Transverse colon (tissue), 4 donors: ENCODE measurements at regions of chr1 and their contacts with region 1.

Region 1: DNA sequence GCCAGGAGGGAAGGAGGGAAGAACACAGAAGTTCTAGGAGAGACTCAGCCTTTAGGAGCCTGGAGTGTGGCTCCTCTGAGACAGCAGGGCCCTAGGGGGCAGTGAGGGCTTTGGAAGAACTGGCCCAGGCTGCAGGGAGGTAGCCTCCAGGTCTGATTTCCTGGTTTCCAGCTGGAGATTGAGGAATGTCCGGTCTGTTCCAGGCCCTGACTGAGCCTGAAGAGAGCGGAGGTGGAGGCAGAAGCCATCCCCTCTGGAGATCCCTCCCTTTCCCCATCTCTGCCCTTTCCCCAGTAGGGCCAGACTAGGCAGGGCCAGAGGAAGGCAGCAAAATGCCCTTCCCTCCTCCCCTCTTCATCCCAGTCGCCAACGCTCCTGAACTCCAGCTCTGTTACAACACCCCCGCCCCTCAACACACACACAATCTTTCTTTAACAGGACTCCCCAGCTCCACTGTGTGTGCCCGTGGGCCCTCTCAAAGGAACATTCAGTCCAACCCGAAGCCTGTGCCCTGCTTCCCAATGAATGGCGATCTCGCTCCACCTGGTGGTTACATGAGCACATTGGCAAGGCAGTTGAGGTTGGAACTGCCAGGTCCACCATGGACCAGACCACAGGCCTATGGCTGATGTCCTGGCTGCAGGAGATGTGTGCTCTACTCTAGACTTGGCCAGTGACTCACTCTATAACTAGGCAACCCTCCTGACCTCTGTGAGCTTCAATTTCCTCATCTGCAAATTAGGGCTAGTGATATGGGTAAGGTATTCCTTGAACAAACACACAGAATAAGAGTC is 32.0 kb downstream of the MAP7D1 start:
- DNase-seq: peak; percentile 88
- H3K4me3 ChIP-seq: no peak overlapping the region
- H3K27ac ChIP-seq: peak overlapping the region; percentile 77 to 87 (median 82)
- H3K4me1 ChIP-seq: peaks cover 0 to 14% (median 5%) of the 10 kb centered on the region in 4 donors
- H3K27me3 ChIP-seq: no peaks in the 10 kb centered on the region
- CTCF ChIP-seq: peak; percentile 84 to 97 (median 87)
- EP300 ChIP-seq: no peak
- POLR2A ChIP-seq: no peak

Region 2: GRCh38 chr1:36149237-36149972 is 38.6 kb before region 1 on chr1 and contains the start of gene TRAPPC3:
- in situ Hi-C with region 1: no loop called
- intact Hi-C with region 1: loop called (anchors 2 kb)
- DNase-seq: peak; percentile 100
- H3K4me3 ChIP-seq: peak within 1 kb of the TSS; percentile 43 to 91 (median 67)
- H3K27ac ChIP-seq: peak within 1 kb of the TSS; percentile 94 to 98 (median 96)
- H3K4me1 ChIP-seq: peaks cover 26 to 44% (median 38%) of the 10 kb centered on the region in 4 donors
- H3K27me3 ChIP-seq: no peaks in the 10 kb centered on the region
- CTCF ChIP-seq: peak; percentile 73 to 98 (median 90)
- EP300 ChIP-seq: no peak
- POLR2A ChIP-seq: peak; percentile 84
- total RNA-seq, gene TRAPPC3: 54.6 to 165 (median 105) TPM

Region 3: DNA sequence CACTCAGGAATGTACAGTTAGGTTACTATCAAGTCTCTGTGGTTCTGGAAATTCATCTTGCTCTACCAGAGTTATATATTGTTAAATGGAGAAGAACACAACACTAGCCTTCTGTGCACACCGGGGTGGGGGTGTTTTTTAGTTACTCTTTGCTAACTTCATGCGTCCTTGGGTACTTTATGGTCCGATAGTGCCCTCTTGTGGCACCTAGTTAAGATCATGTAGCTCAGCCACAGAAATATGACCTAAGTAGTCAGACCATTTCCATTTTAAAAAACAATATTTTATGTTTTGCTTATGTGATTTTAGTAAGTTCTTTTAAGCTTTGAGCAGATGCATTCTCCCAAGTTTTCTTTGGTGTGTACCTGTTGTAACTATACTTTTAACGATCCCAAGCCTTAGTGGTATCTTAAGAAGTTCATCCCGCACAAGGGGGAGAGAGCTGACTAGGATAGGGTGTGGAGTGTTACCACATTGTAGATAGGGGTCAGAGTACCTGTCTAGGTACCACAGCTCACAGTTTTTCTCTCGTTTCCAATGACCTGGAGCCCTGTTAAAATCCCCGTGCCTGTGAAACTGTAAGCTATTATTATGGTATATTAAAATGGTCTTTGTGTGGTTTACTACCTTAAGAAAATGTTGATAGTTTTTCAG is 97.6 kb after region 1 on chr1:
- in situ Hi-C with region 1: loop called in 3 of 4 experiments (anchors 25 kb)
- intact Hi-C with region 1: no loop called
- DNase-seq: peak; percentile 61
- H3K4me3 ChIP-seq: no peak overlapping the region
- H3K27ac ChIP-seq: peak overlapping the region; percentile 5 to 51 (median 30)
- H3K4me1 ChIP-seq: peaks cover 0 to 28% (median under 1%) of the 10 kb centered on the region in 4 donors
- H3K27me3 ChIP-seq: no peaks in the 10 kb centered on the region
- CTCF ChIP-seq: peak; percentile 65 to 72 (median 68)
- EP300 ChIP-seq: no peak
- POLR2A ChIP-seq: no peak

Region 4: GRCh38 chr1:36420836-36421664 is 233.1 kb after region 1 on chr1:
- in situ Hi-C with region 1: loop called in 1 of 4 experiments (anchors 25 kb)
- intact Hi-C with region 1: no loop called
- DNase-seq: peak; percentile 93
- H3K4me3 ChIP-seq: no peak overlapping the region
- H3K27ac ChIP-seq: peak overlapping the region in 3 of 4 donors; percentile 10 to 50 (median 15)
- H3K4me1 ChIP-seq: peaks cover 0 to 9% (median 3%) of the 10 kb centered on the region in 4 donors
- H3K27me3 ChIP-seq: no peaks in the 10 kb centered on the region
- CTCF ChIP-seq: peak; percentile 91 to 95 (median 92)
- EP300 ChIP-seq: no peak
- POLR2A ChIP-seq: no peak